ENCODE measurements at regions of chr11 and their contacts with region 1.

Region 1: GRCh38 chr11:10808553-10809372 is at the start of gene EIF4G2:
- DNase-seq: peak; percentile 96
- ATAC-seq: peak; percentile 91
- H3K4me3 Mint-ChIP-seq: peak within 1 kb of the TSS; percentile 97
- H3K27ac Mint-ChIP-seq: peak within 1 kb of the TSS; percentile 99
- H3K4me1 Mint-ChIP-seq: peaks cover 42% of the 10 kb centered on the region
- H3K27me3 Mint-ChIP-seq: no peaks in the 10 kb centered on the region
- CTCF ChIP-seq: no peak
- total RNA-seq, gene EIF4G2: 675 and 769 TPM in 2 replicates

Region 2: GRCh38 chr11:9460322-9461067 is 1348.3 kb before region 1 on chr11 and contains the start of gene ZNF143:
- CTCF ChIA-PET with region 1: no interaction called
- POLR2A ChIA-PET with region 1: interaction called, 15 read pairs
- intact Hi-C with region 1: no loop called
- DNase-seq: peak; percentile 99
- ATAC-seq: peak; percentile 85
- H3K4me3 Mint-ChIP-seq: peak within 1 kb of the TSS; percentile 97
- H3K27ac Mint-ChIP-seq: peak within 1 kb of the TSS; percentile 98
- H3K4me1 Mint-ChIP-seq: peaks cover 30% of the 10 kb centered on the region
- H3K27me3 Mint-ChIP-seq: no peaks in the 10 kb centered on the region
- CTCF ChIP-seq: no peak
- total RNA-seq, gene ZNF143: 37.8 and 41.1 TPM in 2 replicates

Region 3: DNA sequence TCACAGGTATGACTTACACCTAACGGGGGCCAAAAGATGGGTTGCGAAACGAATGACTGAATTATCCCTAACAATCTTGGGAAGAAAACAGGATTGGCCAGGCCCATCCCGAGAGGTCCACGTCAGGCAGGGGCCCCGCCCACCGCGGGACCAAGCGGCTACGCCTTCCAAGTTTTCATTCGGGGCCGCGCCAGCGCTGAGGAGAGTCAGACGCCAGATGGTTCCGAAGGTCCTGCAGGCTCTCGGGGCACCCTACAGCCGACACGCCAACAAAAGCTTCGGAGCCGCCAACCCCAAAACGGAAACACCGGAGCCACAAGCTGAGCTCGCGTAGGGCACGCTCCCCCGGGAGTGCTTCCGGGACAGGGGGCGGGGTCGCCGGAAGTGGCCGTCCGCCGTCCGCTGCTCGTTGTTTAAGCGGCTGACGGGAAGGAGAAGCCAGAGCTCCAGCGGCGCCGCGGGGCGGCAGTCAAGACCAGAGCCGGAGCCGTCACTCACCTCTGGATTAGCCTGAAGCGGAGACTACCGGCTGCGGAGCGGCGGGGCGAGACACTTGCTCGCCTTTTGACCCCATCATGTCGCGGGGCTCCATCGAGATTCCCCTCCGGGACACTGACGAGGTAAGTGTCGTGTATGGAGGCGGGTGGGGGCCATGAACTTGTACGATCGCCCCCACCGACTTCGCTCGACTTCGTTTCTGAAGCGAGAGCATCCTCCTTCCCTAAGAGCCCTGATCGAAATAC is 57.8 kb before region 1 on chr11 and contains the start of gene CTR9:
- CTCF ChIA-PET with region 1: interaction called, 4 read pairs
- POLR2A ChIA-PET with region 1: interaction called, 30 read pairs
- intact Hi-C with region 1: no loop called
- DNase-seq: peak; percentile 90
- ATAC-seq: peak; percentile 90
- H3K4me3 Mint-ChIP-seq: peak within 1 kb of the TSS; percentile 95
- H3K27ac Mint-ChIP-seq: peak within 1 kb of the TSS; percentile 89
- H3K4me1 Mint-ChIP-seq: peaks cover 23% of the 10 kb centered on the region
- H3K27me3 Mint-ChIP-seq: no peaks in the 10 kb centered on the region
- CTCF ChIP-seq: no peak
- total RNA-seq, gene CTR9: 50.6 and 52.8 TPM in 2 replicates

Region 4: DNA sequence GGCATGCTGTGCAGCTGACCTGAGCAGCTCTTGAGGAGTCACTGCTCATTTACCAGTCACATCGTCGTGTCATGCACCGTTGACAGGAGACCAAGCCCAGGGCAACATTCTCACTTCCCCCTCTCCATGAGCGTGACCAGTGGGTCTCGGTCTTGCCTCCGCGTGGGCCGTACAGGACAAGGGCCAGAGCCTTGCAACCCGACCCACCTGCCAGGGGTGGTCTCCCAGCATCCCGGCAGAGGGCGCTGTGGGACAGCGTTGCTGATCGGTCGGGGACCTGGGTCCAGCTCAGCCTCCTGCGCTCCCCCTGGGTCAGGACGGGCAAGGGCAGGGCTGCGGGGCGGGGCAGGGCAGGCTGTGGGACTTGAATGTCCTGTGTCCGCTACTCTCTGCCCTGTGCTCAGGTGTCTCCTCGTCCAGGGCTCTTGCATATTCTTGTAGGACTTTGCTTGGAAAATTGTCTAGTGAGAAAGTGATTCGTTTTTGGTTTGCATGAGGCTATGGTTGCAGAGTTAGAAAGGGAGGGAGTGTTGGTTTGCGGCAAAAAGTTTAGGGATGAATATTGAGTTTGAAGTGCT is 16.3 kb before region 1 on chr11:
- CTCF ChIA-PET with region 1: interaction called, 27 read pairs
- POLR2A ChIA-PET with region 1: interaction called, 77 read pairs
- intact Hi-C with region 1: loop called (anchors 1 kb)
- DNase-seq: peak; percentile 83
- ATAC-seq: peak; percentile 91
- H3K4me3 Mint-ChIP-seq: peak overlapping the region; percentile 13
- H3K27ac Mint-ChIP-seq: no peak overlapping the region
- H3K4me1 Mint-ChIP-seq: peaks cover 16% of the 10 kb centered on the region
- H3K27me3 Mint-ChIP-seq: no peaks in the 10 kb centered on the region
- CTCF ChIP-seq: peak; percentile 72

Region 5: DNA sequence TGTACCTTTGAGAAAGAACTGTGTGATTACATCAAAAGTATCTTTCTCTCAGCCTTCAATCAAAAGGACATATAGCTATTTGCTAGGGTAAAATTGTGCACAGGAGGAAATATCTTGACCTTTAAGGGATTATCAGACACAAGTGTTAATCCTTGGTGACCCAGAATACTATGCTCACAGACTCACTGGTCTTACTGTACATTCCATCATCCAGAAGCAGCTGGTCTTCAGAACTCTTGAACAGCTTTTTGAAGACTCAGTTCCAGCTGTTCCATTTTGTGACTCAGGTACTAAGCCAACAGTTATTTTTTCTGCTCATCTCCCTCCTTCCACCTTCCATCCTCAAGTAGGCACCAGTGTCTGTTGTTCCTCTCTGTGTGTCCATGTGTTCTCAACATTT is 29.3 kb after region 1 on chr11:
- CTCF ChIA-PET with region 1: no interaction called
- POLR2A ChIA-PET with region 1: interaction called, 16 read pairs
- intact Hi-C with region 1: no loop called
- DNase-seq: no peak
- ATAC-seq: no peak
- H3K4me3 Mint-ChIP-seq: no peak overlapping the region
- H3K27ac Mint-ChIP-seq: no peak overlapping the region
- H3K4me1 Mint-ChIP-seq: peaks cover 16% of the 10 kb centered on the region
- H3K27me3 Mint-ChIP-seq: no peaks in the 10 kb centered on the region
- CTCF ChIP-seq: no peak

Region 6: DNA sequence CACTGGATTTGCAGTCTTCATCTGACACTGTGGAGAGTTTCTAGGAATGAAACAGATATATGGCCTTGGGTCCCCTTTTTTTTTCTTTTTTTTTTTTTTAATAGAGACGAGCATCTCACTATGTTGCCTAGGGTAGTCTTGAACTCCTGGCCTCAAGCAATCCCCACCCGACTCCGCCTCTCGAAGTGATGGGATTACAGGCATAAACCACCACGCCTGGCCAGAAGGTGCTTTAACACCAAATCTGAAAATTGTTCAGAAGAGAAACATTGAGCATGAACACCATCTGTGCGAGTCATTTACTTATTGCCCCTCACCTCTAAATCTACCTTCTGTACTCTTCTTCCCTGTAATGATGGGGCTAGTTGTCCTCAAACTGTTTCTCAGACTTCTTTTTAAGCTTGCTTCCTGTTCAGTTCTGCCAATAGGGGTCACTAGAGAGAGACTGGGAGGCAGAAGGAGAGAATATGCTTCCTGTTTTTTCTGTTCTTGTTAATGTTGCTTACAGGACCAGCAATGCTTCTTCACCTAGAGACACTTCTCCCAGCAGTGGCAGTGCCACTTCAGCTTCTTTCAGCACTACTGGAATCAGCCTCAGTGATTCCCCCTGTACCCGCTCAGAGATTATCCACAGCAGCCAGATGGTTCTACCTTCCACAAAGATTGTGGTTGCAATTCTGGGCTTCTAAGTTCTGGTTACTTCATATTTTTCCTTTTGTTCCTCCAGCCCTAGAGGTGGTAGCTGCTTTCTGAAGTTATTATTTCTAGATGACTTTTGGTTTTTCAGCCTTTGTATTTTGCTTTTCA is 69.8 kb after region 1 on chr11:
- CTCF ChIA-PET with region 1: interaction called, 5 read pairs
- POLR2A ChIA-PET with region 1: interaction called, 21 read pairs
- intact Hi-C with region 1: no loop called
- DNase-seq: no peak
- ATAC-seq: peak; percentile 84
- H3K4me3 Mint-ChIP-seq: no peak overlapping the region
- H3K27ac Mint-ChIP-seq: no peak overlapping the region
- H3K4me1 Mint-ChIP-seq: peaks cover 13% of the 10 kb centered on the region
- H3K27me3 Mint-ChIP-seq: no peaks in the 10 kb centered on the region
- CTCF ChIP-seq: no peak

Region 7: GRCh38 chr11:10933455-10934292 is 124.9 kb after region 1 on chr11:
- CTCF ChIA-PET with region 1: interaction called, 3 read pairs
- POLR2A ChIA-PET with region 1: interaction called, 21 read pairs
- intact Hi-C with region 1: no loop called
- DNase-seq: peak; percentile 74
- ATAC-seq: peak; percentile 96
- H3K4me3 Mint-ChIP-seq: peak overlapping the region; percentile 82
- H3K27ac Mint-ChIP-seq: peak overlapping the region; percentile 18
- H3K4me1 Mint-ChIP-seq: peaks cover 22% of the 10 kb centered on the region
- H3K27me3 Mint-ChIP-seq: peaks cover 28% of the 10 kb centered on the region
- CTCF ChIP-seq: peak; percentile 72

Measured in activated B cell treated with CpG ODN at 0.5 μM for 24 hours (primary cell).